A673 (cell line): ENCODE measurements at regions of chr5 and their contacts with region 1.

Region 1: GRCh38 chr5:131796793-131797693 is at the start of gene FNIP1:
- DNase-seq: peak; percentile 99
- H3K4me3 ChIP-seq: peak within 1 kb of the TSS; percentile 99
- H3K27ac ChIP-seq: peak within 1 kb of the TSS; percentile 94
- H3K4me1 ChIP-seq: peaks cover 13% of the 10 kb centered on the region
- H3K27me3 ChIP-seq: no peaks in the 10 kb centered on the region
- CTCF ChIP-seq: no peak
- total RNA-seq, gene FNIP1: 19.0 and 22.9 TPM in 2 replicates

Region 2: DNA sequence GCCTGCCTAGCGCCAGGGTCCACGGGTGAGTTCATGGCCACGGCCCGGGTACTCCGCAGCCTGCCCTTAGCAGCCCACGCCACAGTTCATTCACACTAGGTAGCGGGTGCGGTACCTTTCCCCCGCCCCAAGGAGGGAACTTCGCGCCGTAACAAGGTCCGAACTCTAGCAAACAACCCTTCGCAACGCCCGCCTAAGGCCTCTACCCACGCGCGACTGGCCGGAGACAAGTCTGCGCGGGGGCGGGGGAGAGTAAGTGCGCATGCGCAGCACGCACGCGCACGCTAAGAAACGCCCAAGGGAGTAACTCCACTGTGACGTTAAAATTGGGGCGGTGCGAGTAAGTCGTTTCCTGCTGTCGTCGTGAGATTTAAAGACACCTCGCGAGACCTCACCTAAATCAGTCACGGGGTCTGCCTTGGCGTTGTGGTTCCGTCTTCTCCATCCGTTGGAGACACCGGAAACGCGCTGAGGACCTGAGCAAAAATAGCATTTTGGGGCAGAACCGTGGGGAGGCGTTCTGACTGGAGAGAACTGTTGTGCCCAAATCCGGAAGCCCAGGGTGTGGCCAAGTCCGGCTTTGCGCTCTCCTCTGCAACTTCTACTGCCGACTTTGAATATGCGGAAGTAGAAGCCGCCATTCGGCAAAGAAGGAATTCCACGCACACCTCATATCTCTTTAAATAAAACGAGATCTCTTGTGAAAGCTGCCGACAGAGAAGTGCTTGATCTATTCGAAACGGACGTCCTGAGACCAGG is 161.9 kb before region 1 on chr5 and contains the start of gene RAPGEF6:
- CTCF ChIA-PET with region 1: no interaction called
- POLR2A ChIA-PET with region 1: no interaction called
- intact Hi-C with region 1: loop called (anchors 5 kb)
- DNase-seq: peak; percentile 100
- H3K4me3 ChIP-seq: peak within 1 kb of the TSS; percentile 64
- H3K27ac ChIP-seq: peak within 1 kb of the TSS; percentile 97
- H3K4me1 ChIP-seq: no peaks in the 10 kb centered on the region
- H3K27me3 ChIP-seq: no peaks in the 10 kb centered on the region
- CTCF ChIP-seq: no peak
- total RNA-seq, gene RAPGEF6: 21.6 and 26.1 TPM in 2 replicates